ENCODE measurements at regions of chr3 and their contacts with region 1.

Region 1: GRCh38 chr3:13495921-13496723 is 16.0 kb downstream of the HDAC11 start:
- DNase-seq: peak; percentile 69
- H3K4me3 ChIP-seq: no peak overlapping the region
- H3K27ac ChIP-seq: peak overlapping the region in 1 of 4 donors; percentile 24
- H3K4me1 ChIP-seq: peaks cover 0 to 5% (median 4%) of the 10 kb centered on the region in 4 donors
- H3K27me3 ChIP-seq: no peaks in the 10 kb centered on the region
- CTCF ChIP-seq: peak; percentile 83 to 94 (median 88)
- EP300 ChIP-seq: no peak
- POLR2A ChIP-seq: no peak

Region 2: DNA sequence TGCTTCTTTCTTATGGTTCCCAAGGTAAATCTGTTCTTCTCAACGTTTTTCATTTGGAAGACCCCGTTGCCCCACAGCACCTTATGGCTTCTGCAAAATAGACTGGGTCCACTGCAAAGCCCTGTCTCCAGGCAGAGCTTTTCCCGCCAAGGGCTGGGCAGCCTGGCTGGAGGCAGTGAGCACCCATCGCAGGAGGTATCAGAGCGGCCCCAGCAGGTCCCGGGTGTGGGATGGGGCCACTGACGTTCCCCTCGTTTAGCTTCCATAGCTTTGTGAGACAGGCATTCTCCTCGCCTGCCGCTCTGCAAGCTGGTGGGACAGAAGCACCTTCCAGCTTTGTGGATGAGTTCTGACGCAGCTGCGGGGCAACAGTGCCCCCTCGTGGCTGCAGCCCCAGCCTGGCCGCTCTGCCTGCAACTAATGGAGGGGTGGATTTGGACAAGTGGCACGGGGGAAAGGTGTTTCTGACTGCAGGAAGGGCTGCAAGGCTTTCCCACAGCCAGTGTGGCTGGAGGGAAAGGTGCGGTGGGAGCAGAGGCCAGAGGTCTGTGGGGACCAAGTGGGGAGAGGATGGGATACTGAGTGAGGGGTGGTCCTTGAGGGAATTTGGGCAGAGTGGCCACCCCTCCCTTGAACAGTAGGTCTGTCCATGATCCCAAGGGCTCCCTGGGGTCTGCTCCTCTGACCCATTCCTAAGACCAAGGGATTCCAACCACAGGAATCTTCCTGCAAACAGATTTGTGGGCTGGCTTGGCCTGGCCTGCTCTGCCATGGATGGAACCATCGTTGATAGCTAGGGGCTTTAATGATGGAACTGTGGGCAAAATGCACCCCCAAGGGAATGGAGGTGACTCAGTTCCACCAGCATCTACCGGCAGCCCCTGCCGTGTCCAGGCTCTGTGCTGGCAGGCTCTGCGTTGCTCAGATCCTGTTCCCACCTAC is 152.2 kb after region 1 on chr3:
- in situ Hi-C with region 1: loop called (anchors 5 to 10 kb)
- intact Hi-C with region 1: loop called (anchors 2 kb)
- DNase-seq: peak; percentile 79
- H3K4me3 ChIP-seq: no peak overlapping the region
- H3K27ac ChIP-seq: no peak overlapping the region
- H3K4me1 ChIP-seq: peaks cover 0 to 13% (median 1%) of the 10 kb centered on the region in 4 donors
- H3K27me3 ChIP-seq: peaks cover 10% of the 10 kb centered on the region
- CTCF ChIP-seq: peak; percentile 80 to 96 (median 94)
- EP300 ChIP-seq: no peak
- POLR2A ChIP-seq: no peak

Region 3: DNA sequence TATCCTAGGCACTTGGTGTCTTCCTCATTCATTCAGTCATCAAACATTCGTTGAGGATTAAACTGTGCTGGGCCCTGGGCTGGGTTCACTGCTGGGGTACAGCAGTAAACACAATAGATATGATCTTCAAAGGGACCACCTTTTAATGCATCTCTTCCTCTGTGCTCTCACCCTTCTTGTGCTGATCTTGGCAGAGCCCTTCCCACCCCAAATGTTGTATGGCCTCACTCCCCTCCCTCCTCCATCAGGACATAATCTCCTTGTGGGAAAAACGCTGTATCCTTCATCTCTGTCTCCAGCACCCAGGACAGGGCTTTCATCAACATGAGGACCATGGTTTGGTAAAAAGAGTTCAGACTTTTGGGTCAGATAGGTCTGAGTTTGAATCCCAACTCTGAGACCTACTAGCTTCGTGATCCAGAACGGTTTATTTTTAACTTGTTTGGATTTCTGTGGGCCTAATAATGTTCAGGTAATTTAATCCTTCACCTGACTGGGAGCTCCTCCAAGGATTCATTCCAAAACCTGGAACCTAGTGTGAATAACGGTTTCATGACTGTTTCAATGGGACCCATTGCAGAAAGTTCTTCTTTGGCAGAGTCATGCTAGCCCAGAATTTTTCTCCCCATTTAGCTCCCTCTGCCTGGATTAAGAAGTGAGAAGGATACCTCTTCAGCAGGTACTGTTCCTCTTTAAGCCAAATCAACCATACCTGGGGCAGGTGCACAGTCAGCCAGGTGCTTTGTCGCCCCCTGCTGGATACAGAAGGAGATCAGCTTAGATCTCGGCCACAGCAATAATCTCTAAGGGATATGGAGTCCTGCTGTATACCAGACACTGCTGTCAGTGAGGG is 389.0 kb after region 1 on chr3:
- in situ Hi-C with region 1: loop called in 1 of 4 experiments (anchors 10 kb)
- intact Hi-C with region 1: no loop called
- DNase-seq: peak; percentile 54
- H3K4me3 ChIP-seq: no peak overlapping the region
- H3K27ac ChIP-seq: no peak overlapping the region
- H3K4me1 ChIP-seq: peaks cover 0 to 7% (median 5%) of the 10 kb centered on the region in 4 donors
- H3K27me3 ChIP-seq: peaks cover 36% of the 10 kb centered on the region
- CTCF ChIP-seq: peak; percentile 40 to 72 (median 64)
- EP300 ChIP-seq: no peak
- POLR2A ChIP-seq: no peak

Region 4: GRCh38 chr3:14317057-14317553 is 821.0 kb after region 1 on chr3:
- in situ Hi-C with region 1: no loop called
- intact Hi-C with region 1: no loop called
- DNase-seq: no peak
- H3K4me3 ChIP-seq: no peak overlapping the region
- H3K27ac ChIP-seq: no peak overlapping the region
- H3K4me1 ChIP-seq: peaks cover 0 to 9% (median 6%) of the 10 kb centered on the region in 4 donors
- H3K27me3 ChIP-seq: no peaks in the 10 kb centered on the region
- CTCF ChIP-seq: no peak
- EP300 ChIP-seq: no peak
- POLR2A ChIP-seq: no peak

Measured in transverse colon (tissue), 4 donors.